Heart right ventricle (tissue), 16 donors: ENCODE measurements at regions of chr1 and their contacts with region 1.

Region 1: GRCh38 chr1:236039740-236040685 is 24.9 kb downstream of the NID1 start:
- DNase-seq: peak in 1 of 2 donors; percentile 36
- ATAC-seq: peak; percentile 66 to 89 (median 82)
- H3K4me3 ChIP-seq: no peak overlapping the region
- H3K27ac ChIP-seq: peak overlapping the region in 8 of 10 donors; percentile 29 to 68 (median 54)
- H3K4me1 ChIP-seq: peaks cover 5 to 34% (median 11%) of the 10 kb centered on the region in 9 donors
- H3K27me3 ChIP-seq: no peaks in the 10 kb centered on the region
- CTCF ChIP-seq: no peak

Region 2: GRCh38 chr1:235206533-235207208 is 833.3 kb before region 1 on chr1:
- intact Hi-C with region 1: loop called in 1 of 10 experiments (anchors 10 kb)
- DNase-seq: no peak
- ATAC-seq: no peak
- H3K4me3 ChIP-seq: no peak overlapping the region
- H3K27ac ChIP-seq: no peak overlapping the region
- H3K4me1 ChIP-seq: no peaks in the 10 kb centered on the region
- H3K27me3 ChIP-seq: no peaks in the 10 kb centered on the region
- CTCF ChIP-seq: no peak